B cell (primary cell): ENCODE measurements at regions of chr1 and their contacts with region 1.

Region 1: GRCh38 chr1:67149179-67149770 is 14.5 kb upstream of the C1orf141 start:
- DNase-seq: peak; percentile 82
- ATAC-seq: peak; percentile 91
- H3K4me3 ChIP-seq: no peak overlapping the region
- H3K4me3 Mint-ChIP-seq: no peak overlapping the region
- H3K27ac ChIP-seq: no peak overlapping the region
- H3K27ac Mint-ChIP-seq: peak overlapping the region; percentile 43
- H3K4me1 ChIP-seq: peaks cover 7 to 9% of the 10 kb centered on the region in 2 donors
- H3K4me1 Mint-ChIP-seq: peaks cover 9% of the 10 kb centered on the region
- H3K27me3 ChIP-seq: no peaks in the 10 kb centered on the region
- H3K27me3 Mint-ChIP-seq: peaks cover 16% of the 10 kb centered on the region
- CTCF ChIP-seq: peak; percentile 83

Region 2: GRCh38 chr1:65729259-65729658 is 1420.0 kb before region 1 on chr1:
- CTCF ChIA-PET with region 1: no interaction called
- POLR2A ChIA-PET with region 1: no interaction called
- intact Hi-C with region 1: no loop called
- DNase-seq: no peak
- ATAC-seq: no peak
- H3K4me3 ChIP-seq: no peak overlapping the region
- H3K4me3 Mint-ChIP-seq: no peak overlapping the region
- H3K27ac ChIP-seq: no peak overlapping the region
- H3K27ac Mint-ChIP-seq: no peak overlapping the region
- H3K4me1 ChIP-seq: no peaks in the 10 kb centered on the region
- H3K4me1 Mint-ChIP-seq: no peaks in the 10 kb centered on the region
- H3K27me3 ChIP-seq: no peaks in the 10 kb centered on the region
- H3K27me3 Mint-ChIP-seq: no peaks in the 10 kb centered on the region
- CTCF ChIP-seq: no peak

Region 3: GRCh38 chr1:66764994-66765578 is 384.2 kb before region 1 on chr1:
- CTCF ChIA-PET with region 1: interaction called, 146 read pairs
- POLR2A ChIA-PET with region 1: no interaction called
- intact Hi-C with region 1: loop called (anchors 1 kb)
- DNase-seq: peak; percentile 61
- ATAC-seq: peak; percentile 41
- H3K4me3 ChIP-seq: no peak overlapping the region
- H3K4me3 Mint-ChIP-seq: no peak overlapping the region
- H3K27ac ChIP-seq: no peak overlapping the region
- H3K27ac Mint-ChIP-seq: no peak overlapping the region
- H3K4me1 ChIP-seq: no peaks in the 10 kb centered on the region
- H3K4me1 Mint-ChIP-seq: no peaks in the 10 kb centered on the region
- H3K27me3 ChIP-seq: no peaks in the 10 kb centered on the region
- H3K27me3 Mint-ChIP-seq: no peaks in the 10 kb centered on the region
- CTCF ChIP-seq: peak; percentile 88

Region 4: DNA sequence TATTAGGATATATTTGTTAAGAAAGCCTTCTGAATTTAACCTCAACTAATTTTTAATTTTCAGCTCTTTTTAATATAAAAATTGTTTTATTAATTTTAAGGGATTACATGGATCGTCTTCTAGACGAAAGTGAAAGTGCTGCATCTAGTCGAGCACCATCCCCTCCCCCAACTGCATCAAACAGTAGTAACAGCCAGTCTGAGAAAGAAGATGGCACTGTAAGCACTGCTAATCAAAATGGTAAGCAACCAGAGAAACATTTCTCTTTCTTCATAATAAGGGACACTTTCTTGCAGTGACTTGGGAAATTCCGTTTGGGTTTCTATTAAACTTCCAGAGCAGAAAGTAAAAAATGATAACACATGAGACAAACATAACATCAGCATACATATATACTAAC is 167.6 kb before region 1 on chr1:
- CTCF ChIA-PET with region 1: interaction called, 44 read pairs
- POLR2A ChIA-PET with region 1: no interaction called
- intact Hi-C with region 1: no loop called
- DNase-seq: peak; percentile 29
- ATAC-seq: no peak
- H3K4me3 ChIP-seq: peak overlapping the region in 1 of 5 experiments; percentile 5
- H3K4me3 Mint-ChIP-seq: peak overlapping the region; percentile 41
- H3K27ac ChIP-seq: peak overlapping the region in 1 of 2 donors; percentile 74
- H3K27ac Mint-ChIP-seq: no peak overlapping the region
- H3K4me1 ChIP-seq: peaks cover 0 to 6% of the 10 kb centered on the region in 2 donors
- H3K4me1 Mint-ChIP-seq: peaks cover 14% of the 10 kb centered on the region
- H3K27me3 ChIP-seq: no peaks in the 10 kb centered on the region
- H3K27me3 Mint-ChIP-seq: no peaks in the 10 kb centered on the region
- CTCF ChIP-seq: no peak

Region 5: GRCh38 chr1:67005068-67005467 is 144.2 kb before region 1 on chr1:
- CTCF ChIA-PET with region 1: interaction called, 58 read pairs
- POLR2A ChIA-PET with region 1: no interaction called
- intact Hi-C with region 1: no loop called
- DNase-seq: no peak
- ATAC-seq: no peak
- H3K4me3 ChIP-seq: no peak overlapping the region
- H3K4me3 Mint-ChIP-seq: no peak overlapping the region
- H3K27ac ChIP-seq: no peak overlapping the region
- H3K27ac Mint-ChIP-seq: no peak overlapping the region
- H3K4me1 ChIP-seq: no peaks in the 10 kb centered on the region
- H3K4me1 Mint-ChIP-seq: peaks cover 6% of the 10 kb centered on the region
- H3K27me3 ChIP-seq: no peaks in the 10 kb centered on the region
- H3K27me3 Mint-ChIP-seq: no peaks in the 10 kb centered on the region
- CTCF ChIP-seq: no peak

Region 6: DNA sequence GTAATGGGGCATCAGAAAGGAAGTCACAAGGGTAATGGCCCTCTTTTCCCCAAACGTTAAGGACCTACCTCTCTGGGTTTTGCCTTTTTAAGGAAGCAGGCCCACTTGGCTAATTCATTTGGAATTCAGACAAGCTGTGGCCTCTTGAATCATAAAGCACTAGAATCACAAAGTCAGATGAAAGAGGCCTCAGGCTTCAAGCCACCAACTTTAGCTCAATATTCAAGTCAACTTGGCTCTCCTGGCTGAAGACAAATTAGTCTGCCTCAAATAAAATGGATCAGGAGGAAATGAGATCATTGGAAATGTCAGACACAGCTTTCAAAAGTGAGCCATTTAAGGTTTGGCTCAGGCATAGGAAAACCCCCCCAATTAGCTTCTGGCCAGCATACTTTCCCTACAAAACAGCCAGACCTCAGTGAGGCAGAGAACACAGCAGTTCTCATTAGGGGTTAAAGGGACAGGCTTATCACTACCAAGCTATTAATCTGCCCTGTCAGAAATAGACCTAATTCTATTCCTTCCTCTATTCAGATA is 129.6 kb before region 1 on chr1:
- CTCF ChIA-PET with region 1: interaction called, 12 read pairs
- POLR2A ChIA-PET with region 1: no interaction called
- intact Hi-C with region 1: no loop called
- DNase-seq: no peak
- ATAC-seq: no peak
- H3K4me3 ChIP-seq: no peak overlapping the region
- H3K4me3 Mint-ChIP-seq: no peak overlapping the region
- H3K27ac ChIP-seq: no peak overlapping the region
- H3K27ac Mint-ChIP-seq: no peak overlapping the region
- H3K4me1 ChIP-seq: no peaks in the 10 kb centered on the region
- H3K4me1 Mint-ChIP-seq: no peaks in the 10 kb centered on the region
- H3K27me3 ChIP-seq: no peaks in the 10 kb centered on the region
- H3K27me3 Mint-ChIP-seq: no peaks in the 10 kb centered on the region
- CTCF ChIP-seq: no peak

Region 7: DNA sequence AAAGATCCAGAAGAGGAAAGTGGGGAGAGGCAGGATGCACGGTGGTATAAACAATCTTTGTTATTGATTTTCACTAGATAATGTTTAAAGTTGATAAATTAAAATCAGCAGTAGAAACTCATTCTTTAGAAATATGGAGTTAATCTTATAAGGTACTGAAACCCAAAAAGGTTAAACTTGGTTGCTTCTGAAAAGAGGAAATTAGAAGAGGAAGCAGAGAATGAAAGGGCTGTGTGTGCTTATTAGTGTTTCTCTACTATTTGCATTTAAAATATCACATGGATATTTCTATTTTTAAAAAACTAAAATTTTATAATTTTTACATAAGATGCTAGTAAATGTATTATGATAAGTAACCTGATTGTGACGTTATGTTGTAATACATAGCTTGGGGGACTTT is 38.9 kb before region 1 on chr1:
- CTCF ChIA-PET with region 1: interaction called, 11 read pairs
- POLR2A ChIA-PET with region 1: no interaction called
- intact Hi-C with region 1: loop called (anchors 5 kb)
- DNase-seq: peak; percentile 61
- ATAC-seq: peak; percentile 34
- H3K4me3 ChIP-seq: peak overlapping the region in 1 of 5 experiments; percentile 26
- H3K4me3 Mint-ChIP-seq: peak overlapping the region; percentile 14
- H3K27ac ChIP-seq: no peak overlapping the region
- H3K27ac Mint-ChIP-seq: no peak overlapping the region
- H3K4me1 ChIP-seq: peaks cover 27 to 38% of the 10 kb centered on the region in 2 donors
- H3K4me1 Mint-ChIP-seq: peaks cover 40% of the 10 kb centered on the region
- H3K27me3 ChIP-seq: no peaks in the 10 kb centered on the region
- H3K27me3 Mint-ChIP-seq: no peaks in the 10 kb centered on the region
- CTCF ChIP-seq: no peak